ENCODE measurements at regions of chr7 and their contacts with region 1.

Region 1: GRCh38 chr7:151057989-151058780 is 488 bp upstream of the CDK5 start:
- DNase-seq: peak; percentile 98 to 100 (median 99)
- ATAC-seq: peak; percentile 88 to 93 (median 91)
- H3K4me3 ChIP-seq: peak overlapping the region in 11 of 12 donors; percentile 68 to 100 (median 92)
- H3K27ac ChIP-seq: peak overlapping the region; percentile 90 to 99 (median 98)
- H3K4me1 ChIP-seq: peaks cover 9 to 53% (median 46%) of the 10 kb centered on the region in 12 donors
- H3K27me3 ChIP-seq: no peaks in the 10 kb centered on the region
- CTCF ChIP-seq: peak in 1 of 12 donors; percentile 8
- POLR2A ChIP-seq: peak; percentile 68 to 97

Region 2: GRCh38 chr7:149714050-149714909 is 1343.9 kb before region 1 on chr7:
- intact Hi-C with region 1: loop called in 1 of 10 experiments (anchors 5 kb)
- DNase-seq: peak; percentile 92 to 97 (median 93)
- ATAC-seq: peak; percentile 71 to 90 (median 88)
- H3K4me3 ChIP-seq: peak overlapping the region; percentile 54 to 94 (median 78)
- H3K27ac ChIP-seq: peak overlapping the region in 11 of 12 donors; percentile 72 to 94 (median 86)
- H3K4me1 ChIP-seq: peaks cover 4 to 49% (median 24%) of the 10 kb centered on the region in 12 donors
- H3K27me3 ChIP-seq: no peaks in the 10 kb centered on the region
- CTCF ChIP-seq: peak in 1 of 12 donors; percentile 10
- POLR2A ChIP-seq: no peak

Region 3: DNA sequence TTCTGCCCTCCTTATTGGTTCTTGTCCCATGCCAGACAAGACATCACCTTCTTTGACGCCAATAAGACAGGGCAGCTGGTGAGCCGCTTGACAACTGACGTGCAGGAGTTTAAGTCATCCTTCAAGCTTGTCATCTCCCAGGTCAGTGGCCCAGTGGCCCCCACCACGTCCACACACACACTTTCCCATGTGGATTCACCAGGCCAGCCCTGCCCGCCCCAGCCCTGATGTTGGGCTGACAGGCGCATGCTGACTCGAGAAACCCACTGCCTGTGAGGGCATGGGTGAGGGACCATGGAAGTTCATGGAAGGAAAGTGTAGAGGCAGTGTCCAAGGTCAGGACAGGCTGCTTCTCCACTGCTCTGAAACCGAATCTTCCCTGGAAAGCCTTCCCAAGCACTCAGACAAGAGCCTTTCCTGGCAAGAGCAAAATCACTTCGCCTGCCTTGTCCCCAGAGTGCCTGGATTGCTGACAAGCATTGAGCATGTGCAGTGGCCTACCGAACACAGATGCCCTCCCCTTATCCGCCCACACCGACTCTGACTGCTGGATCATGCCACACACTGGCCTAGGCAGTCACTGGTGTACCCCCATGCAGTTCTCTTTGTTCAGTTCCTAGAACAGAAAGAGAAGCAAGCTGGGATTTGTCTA is 23.4 kb before region 1 on chr7:
- intact Hi-C with region 1: loop called in 1 of 10 experiments (anchors 2 kb)
- DNase-seq: peak in 2 of 5 donors; percentile 59 to 65
- ATAC-seq: peak; percentile 49 to 76 (median 62)
- H3K4me3 ChIP-seq: no peak overlapping the region
- H3K27ac ChIP-seq: peak overlapping the region in 8 of 12 donors; percentile 2 to 71 (median 52)
- H3K4me1 ChIP-seq: peaks cover 7 to 32% (median 18%) of the 10 kb centered on the region in 12 donors
- H3K27me3 ChIP-seq: no peaks in the 10 kb centered on the region
- CTCF ChIP-seq: no peak
- POLR2A ChIP-seq: no peak

Region 4: GRCh38 chr7:151085691-151086620 is 27.8 kb after region 1 on chr7 and contains the start of gene AGAP3:
- intact Hi-C with region 1: loop called in 6 of 10 experiments (anchors 1 to 2 kb)
- DNase-seq: peak; percentile 91 to 94 (median 92)
- ATAC-seq: peak; percentile 53 to 69 (median 61)
- H3K4me3 ChIP-seq: peak within 1 kb of the TSS; percentile 60 to 96 (median 81)
- H3K27ac ChIP-seq: peak within 1 kb of the TSS; percentile 85 to 95 (median 92)
- H3K4me1 ChIP-seq: peaks cover 14 to 77% (median 63%) of the 10 kb centered on the region in 12 donors
- H3K27me3 ChIP-seq: no peaks in the 10 kb centered on the region
- CTCF ChIP-seq: no peak
- POLR2A ChIP-seq: peak in 1 of 2 donors; percentile 75
- total RNA-seq, gene AGAP3: 30.3 to 83.7 (median 57.6) TPM

Region 5: DNA sequence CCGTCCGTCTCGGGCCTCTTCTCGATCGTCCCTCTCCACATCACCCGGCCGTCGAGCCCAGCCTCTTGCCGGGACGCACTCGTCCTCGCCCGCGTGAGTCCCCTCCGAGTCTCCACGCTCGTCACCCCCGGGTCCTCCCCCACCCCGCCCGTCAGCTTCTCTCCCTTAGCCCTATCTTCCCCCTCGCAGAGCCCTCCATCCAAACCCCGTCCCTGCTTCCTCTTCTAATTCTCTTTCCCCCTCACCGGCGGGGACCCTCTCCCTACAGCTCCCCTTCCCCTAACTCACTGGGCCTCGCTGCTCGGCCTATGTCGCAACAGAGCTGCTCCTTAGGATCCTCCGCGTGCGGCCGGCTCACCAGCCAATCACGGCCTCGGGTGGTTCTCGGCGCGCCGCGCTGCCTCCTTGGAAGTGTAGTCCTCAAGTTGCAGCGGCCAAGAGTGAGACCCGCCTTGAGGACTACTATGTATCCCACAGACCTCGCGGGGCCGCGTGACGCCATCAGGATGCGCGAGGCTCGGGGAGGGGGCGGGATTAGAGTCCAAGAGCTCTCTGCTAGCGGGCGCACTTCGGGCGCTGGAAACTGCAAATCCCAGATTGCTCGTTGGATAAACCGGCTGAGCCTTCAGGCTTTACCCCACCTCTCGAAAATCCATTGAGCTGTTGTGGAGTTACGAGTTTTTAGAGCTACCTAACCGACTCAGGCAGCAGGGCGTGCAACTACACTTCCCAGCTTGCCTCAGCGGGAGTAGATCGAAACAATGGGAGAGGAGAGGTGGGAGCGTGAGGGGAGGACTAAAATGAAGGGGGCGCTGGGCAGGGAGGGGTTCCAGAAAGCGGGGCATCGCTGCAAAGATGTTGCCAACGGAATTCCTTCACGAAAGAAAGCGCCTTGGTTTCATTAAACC is 168.9 kb after region 1 on chr7 and contains the start of gene ABCF2:
- intact Hi-C with region 1: loop called in 1 of 10 experiments (anchors 10 kb)
- DNase-seq: peak; percentile 98 to 99 (median 99)
- ATAC-seq: peak; percentile 99 to 100 (median 99)
- H3K4me3 ChIP-seq: peak within 1 kb of the TSS; percentile 76 to 99 (median 89)
- H3K27ac ChIP-seq: peak within 1 kb of the TSS in 11 of 12 donors; percentile 69 to 87 (median 81)
- H3K4me1 ChIP-seq: peaks cover 3 to 39% (median 27%) of the 10 kb centered on the region in 12 donors
- H3K27me3 ChIP-seq: no peaks in the 10 kb centered on the region
- CTCF ChIP-seq: peak in 1 of 12 donors; percentile 10
- POLR2A ChIP-seq: no peak
- total RNA-seq, gene ABCF2: 23.7 to 48.8 (median 33.0) TPM

Measured in heart left ventricle (tissue), 16 donors.